Right ventricle myocardium superior (tissue), 1 donor: ENCODE measurements at regions of chr3 and their contacts with region 1.

Region 1: GRCh38 chr3:107063351-107063750 is 313.9 kb upstream of the CCDC54 start:
- DNase-seq: no peak
- ATAC-seq: peak; percentile 77

Region 2: GRCh38 chr3:106823701-106824100 is 239.7 kb before region 1 on chr3:
- intact Hi-C with region 1: loop called (anchors 2 kb)
- DNase-seq: no peak
- ATAC-seq: no peak

Region 3: DNA sequence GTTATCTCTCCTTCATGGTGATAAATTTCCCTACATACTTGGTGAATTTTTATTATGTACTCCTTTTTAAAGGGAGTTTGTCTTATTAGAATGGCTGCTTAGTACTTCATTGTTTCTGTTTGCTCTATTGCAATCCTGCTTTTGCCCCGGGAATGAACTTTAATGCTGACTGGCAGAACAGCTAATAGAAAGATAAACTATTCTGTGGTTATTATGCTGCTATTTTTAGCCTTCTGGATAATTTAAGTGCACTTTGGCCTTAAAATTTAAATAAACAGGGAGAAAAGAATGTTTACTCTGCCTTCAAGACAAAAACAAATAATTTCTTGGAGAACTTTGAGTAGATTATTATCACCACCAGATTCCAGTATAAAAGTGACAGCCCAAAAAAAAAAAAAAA is 99.9 kb before region 1 on chr3:
- intact Hi-C with region 1: no loop called
- DNase-seq: no peak
- ATAC-seq: peak; percentile 89